ENCODE measurements at regions of chr3 and their contacts with region 1.

Region 1: DNA sequence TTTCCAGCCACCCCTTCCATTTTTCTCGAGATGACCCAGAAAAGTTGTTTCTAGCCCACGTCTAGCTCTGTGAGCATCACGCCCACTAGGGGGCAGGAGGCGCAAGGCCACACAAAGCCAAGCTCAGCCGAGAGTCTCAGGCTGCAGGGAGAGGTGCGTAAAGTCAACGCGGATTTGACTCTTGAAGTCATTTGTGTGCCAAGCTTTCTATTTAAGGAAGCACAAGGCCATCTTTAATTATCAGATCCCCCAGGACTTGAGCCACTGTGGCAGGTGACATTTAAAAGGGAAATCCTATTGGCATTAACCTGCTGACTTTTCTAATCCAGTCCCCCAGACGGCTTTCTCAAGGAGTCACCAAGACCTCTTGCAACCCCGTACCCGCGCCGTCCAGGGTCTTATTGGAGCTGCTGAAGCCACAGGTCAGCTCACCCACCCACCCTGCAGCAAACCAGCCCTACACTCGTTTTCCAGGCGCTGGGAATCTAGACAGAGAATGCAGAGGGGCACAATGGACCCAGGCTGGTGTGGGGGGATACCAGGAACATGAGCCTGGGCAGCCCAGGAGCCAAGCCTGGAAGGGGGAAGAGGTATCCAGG is 62.1 kb downstream of the CAPN7 start:
- DNase-seq: peak; percentile 74 to 89
- H3K4me3 ChIP-seq: no peak overlapping the region
- H3K4me1 ChIP-seq: no peaks in the 10 kb centered on the region
- H3K27me3 ChIP-seq: no peaks in the 10 kb centered on the region

Region 2: DNA sequence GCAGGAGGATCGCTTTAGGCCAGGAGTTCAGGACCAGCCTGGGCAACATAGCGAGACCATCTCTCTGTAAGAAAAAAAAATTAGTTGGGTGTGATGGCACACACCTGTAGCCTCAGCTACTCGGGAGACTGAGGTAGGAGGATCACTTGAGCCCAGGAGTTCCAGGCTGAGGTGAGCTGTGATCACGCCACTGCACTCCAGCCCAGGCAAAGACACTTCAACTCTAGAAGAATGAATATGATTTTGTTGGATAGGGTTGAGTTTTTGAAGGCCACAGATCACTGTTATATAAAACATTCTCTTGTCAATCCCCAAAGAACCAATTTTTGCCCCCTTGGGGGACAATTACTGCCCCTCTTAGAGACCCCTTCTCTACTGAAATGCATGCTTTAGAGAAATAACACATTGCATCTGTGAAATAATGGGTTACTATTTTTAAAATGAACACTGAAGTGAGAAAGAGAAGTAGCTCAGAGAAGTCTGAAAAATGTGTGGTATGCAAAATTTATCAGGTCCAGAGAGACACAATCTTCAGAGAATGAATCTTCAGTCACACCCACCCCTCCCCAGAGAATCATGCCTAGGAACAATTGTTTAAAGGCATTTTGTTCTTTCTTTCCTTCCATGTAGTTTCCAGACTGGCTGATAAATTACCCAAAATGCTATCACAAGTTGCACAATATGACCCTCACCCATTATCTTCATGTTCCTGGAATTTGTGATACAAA is 116.5 kb after region 1 on chr3:
- in situ Hi-C with region 1: loop called (anchors 5 kb)
- DNase-seq: no peak
- H3K4me3 ChIP-seq: no peak overlapping the region
- H3K4me1 ChIP-seq: no peaks in the 10 kb centered on the region
- H3K27me3 ChIP-seq: no peaks in the 10 kb centered on the region

Region 3: GRCh38 chr3:15409239-15410168 is 141.4 kb after region 1 on chr3:
- in situ Hi-C with region 1: no loop called
- DNase-seq: no peak
- H3K4me3 ChIP-seq: no peak overlapping the region
- H3K4me1 ChIP-seq: no peaks in the 10 kb centered on the region
- H3K27me3 ChIP-seq: no peaks in the 10 kb centered on the region